Activated CD4-positive, alpha-beta memory T cell treated with anti-CD3 and anti-CD28 coated beads for 36 hours (primary cell): ENCODE measurements at regions of chr4 and their contacts with region 1.

Region 1: DNA sequence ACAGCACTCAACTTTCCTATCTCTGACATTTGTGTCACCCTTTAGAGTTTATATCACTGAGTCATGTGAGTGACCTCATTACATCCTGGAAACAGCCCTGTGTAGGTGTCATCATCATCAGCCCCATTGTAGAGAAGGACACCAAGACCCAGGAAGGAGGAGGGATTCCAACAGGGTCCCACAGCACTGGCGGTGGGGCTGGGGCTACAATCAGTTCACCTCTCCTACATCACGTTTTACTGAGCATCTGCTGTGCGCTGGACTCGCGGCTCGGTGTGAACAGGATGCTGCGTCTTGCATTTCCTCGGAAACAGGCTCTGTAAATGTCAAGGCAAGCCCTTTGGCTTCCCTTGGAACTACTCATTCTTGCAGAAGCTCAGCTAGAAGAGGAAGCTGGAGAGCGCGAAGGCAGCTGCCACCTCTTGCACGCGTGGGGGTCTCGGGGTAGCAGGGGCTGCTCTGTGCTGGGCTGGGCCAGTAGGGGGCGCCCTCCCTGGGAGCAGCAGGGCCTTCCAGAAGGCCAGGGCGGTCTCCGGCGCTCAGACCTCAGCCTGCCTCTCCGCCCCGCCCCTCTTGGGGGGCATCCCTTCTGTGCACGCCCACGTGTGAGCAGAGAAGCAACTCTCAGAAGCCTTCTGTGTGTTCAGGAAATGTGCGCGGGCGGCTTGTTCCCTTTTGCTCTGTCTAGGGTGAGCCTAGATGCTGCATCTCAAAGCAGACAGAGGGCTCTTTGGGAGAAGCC is 29.0 kb downstream of the REELD1 start:
- DNase-seq: peak; percentile 83
- H3K4me3 Mint-ChIP-seq: peak overlapping the region; percentile 65
- H3K27ac Mint-ChIP-seq: peak overlapping the region; percentile 80
- H3K4me1 Mint-ChIP-seq: peaks cover 36% of the 10 kb centered on the region
- H3K27me3 Mint-ChIP-seq: peaks cover 2% of the 10 kb centered on the region

Region 2: DNA sequence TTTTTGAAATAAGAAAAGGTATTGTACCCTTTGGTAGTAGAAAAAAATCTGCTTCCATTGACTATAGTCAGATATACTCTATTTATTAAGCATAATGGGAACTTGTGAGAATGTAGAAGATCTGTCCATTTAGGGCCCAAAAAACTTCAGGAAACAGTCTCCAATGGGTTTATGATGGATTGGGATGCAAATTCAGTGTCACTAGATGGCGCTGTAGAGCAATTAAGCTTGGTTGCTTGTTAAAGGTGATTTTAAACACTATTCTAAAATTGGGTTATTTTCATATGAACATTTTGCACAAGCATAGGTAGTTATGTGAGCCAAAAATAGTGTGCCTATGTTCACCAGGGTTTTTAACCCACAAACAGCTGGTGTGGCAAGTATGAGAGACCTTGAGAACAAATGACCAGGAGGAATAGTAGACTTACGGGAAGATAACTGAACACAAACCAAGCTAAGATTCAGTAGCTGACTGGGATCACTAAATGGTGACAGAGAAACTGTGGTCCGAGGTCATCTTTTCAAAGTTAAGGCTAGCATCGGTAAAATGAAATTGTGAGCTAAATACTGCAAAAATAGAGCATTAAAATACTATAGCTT is 148.1 kb before region 1 on chr4:
- CTCF ChIA-PET with region 1: no interaction called
- POLR2A ChIA-PET with region 1: no interaction called
- intact Hi-C with region 1: loop called (anchors 2 kb)
- DNase-seq: peak; percentile 12
- H3K4me3 Mint-ChIP-seq: no peak overlapping the region
- H3K27ac Mint-ChIP-seq: no peak overlapping the region
- H3K4me1 Mint-ChIP-seq: no peaks in the 10 kb centered on the region
- H3K27me3 Mint-ChIP-seq: peaks cover 7% of the 10 kb centered on the region

Region 3: DNA sequence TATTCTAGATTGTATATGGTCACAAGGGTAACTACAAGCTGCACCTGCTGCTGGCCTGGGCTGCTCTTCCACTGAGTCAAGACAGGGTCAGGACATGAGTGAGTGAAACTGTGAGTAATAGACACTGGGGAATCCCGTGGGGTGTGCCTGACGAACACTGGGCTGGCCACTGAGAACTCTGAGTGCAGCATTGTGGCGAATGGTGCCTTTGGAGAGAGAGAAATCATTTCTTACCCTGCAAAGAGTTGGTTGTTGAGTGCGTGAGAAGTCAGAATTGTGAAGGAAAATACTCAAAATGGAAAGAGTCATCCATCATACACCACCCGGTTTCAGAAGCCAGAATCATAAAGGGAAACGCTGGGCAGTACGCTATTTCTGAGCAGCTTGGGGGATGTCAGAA is 110.9 kb before region 1 on chr4:
- CTCF ChIA-PET with region 1: no interaction called
- POLR2A ChIA-PET with region 1: no interaction called
- intact Hi-C with region 1: loop called (anchors 1 kb)
- DNase-seq: peak; percentile 86
- H3K4me3 Mint-ChIP-seq: no peak overlapping the region
- H3K27ac Mint-ChIP-seq: peak overlapping the region; percentile 26
- H3K4me1 Mint-ChIP-seq: peaks cover 17% of the 10 kb centered on the region
- H3K27me3 Mint-ChIP-seq: peaks cover 12% of the 10 kb centered on the region

Region 4: DNA sequence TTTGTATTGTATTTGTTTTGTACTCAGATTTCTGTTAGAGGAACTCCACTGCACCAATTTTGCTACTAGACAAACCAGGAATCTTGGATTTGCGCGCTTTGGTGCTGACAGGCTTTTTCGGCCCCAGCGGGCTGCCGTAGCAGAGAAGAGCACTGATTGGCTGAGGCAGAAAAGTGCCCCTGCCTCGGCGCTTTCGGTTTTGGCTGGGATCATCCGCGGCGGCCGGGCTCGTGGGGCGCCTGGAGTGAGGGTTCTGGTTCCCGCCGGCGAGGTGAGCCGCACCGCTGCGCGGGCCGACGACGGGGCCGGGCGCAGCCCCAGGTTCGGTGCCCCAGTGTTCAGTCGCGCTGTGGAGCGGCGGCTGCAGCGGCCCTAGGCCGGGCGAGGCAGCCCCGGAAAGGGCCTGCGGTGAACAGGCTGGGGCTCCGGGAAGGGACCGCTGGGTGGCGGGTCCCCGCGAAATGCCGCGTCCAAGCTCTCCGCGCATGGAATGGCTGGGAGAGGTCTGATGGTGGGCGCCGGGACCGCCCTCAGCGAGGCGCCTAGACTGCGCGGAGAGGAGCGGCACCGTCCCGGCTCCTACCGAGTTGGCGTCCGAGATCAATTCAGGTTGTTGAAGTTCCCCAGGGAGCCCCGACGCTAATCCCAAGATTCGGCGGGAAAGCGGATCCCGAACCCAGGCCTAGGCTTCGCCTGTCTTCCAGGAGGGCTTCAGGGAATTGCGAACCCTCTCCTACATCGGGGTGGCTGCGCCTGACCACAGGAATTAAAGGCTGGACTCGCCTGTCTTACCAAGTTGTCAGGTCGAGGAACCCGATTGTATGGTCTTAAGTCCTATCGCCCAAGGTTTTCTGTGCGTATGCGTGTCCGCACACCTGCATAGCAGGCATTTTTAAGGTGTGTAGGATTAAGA is 67.5 kb before region 1 on chr4 and contains the start of gene LSM6:
- CTCF ChIA-PET with region 1: no interaction called
- POLR2A ChIA-PET with region 1: no interaction called
- intact Hi-C with region 1: loop called (anchors 2 kb)
- DNase-seq: peak; percentile 89
- H3K4me3 Mint-ChIP-seq: peak within 1 kb of the TSS; percentile 83
- H3K27ac Mint-ChIP-seq: peak within 1 kb of the TSS; percentile 87
- H3K4me1 Mint-ChIP-seq: peaks cover 42% of the 10 kb centered on the region
- H3K27me3 Mint-ChIP-seq: no peaks in the 10 kb centered on the region
- total RNA-seq, gene LSM6: 64.2 to 65.5 TPM

Region 5: DNA sequence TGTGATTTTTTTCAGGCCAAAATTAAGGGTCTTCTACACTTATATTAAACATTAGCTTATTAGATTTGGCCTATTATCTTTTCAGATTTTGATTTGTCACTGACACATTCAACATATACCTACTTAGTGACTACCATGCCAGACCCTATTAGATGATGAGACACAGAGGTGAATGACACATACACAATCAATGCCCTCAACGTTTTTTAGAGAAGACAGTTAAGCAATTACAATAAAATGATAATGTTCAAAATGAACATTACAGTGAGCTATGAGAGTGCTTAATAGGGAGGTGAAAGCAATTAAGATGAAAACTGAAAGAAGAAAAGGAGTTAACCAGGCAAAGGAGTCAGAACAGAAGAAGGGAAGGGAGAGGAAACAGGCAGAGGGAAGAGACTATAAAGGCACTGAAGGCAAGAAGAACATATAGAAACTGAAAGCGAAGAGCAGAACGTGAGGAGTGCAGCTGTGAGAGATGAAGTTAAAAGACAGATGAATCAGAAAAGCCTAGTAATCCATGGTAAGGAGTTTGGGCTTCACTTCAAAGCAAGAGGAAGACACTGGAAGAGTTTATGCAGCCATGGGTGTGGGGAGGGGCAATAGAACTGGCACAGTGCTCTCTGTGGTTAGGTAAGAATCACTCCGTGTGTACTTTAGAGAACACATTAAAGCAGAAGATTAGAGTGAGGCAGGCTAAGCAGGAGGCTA is 90.0 kb after region 1 on chr4:
- CTCF ChIA-PET with region 1: no interaction called
- POLR2A ChIA-PET with region 1: no interaction called
- intact Hi-C with region 1: loop called (anchors 1 kb)
- DNase-seq: peak; percentile 37
- H3K4me3 Mint-ChIP-seq: no peak overlapping the region
- H3K27ac Mint-ChIP-seq: no peak overlapping the region
- H3K4me1 Mint-ChIP-seq: no peaks in the 10 kb centered on the region
- H3K27me3 Mint-ChIP-seq: no peaks in the 10 kb centered on the region

Region 6: DNA sequence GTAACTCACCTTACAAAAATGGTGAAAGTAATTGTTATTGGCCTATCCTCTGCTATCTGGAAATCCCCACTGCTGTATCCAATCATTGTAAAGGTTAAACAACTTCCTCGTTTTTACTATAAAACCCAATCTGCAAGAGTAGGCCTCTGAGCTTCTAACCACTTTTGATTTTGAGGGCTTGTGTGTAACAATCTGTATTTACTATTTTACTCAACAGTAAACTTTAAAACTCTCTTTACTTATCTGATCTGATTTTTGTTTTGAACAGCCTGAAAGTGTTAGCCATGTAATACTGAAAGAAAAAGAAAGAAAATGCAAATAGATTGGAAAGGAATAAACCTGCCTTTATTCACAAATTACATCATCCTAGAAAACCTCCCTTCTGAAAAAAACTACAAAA is 215.3 kb after region 1 on chr4:
- CTCF ChIA-PET with region 1: no interaction called
- POLR2A ChIA-PET with region 1: no interaction called
- intact Hi-C with region 1: loop called (anchors 1 kb)
- DNase-seq: no peak
- H3K4me3 Mint-ChIP-seq: peak overlapping the region; percentile 46
- H3K27ac Mint-ChIP-seq: peak overlapping the region; percentile 89
- H3K4me1 Mint-ChIP-seq: peaks cover 17% of the 10 kb centered on the region
- H3K27me3 Mint-ChIP-seq: no peaks in the 10 kb centered on the region

Region 7: DNA sequence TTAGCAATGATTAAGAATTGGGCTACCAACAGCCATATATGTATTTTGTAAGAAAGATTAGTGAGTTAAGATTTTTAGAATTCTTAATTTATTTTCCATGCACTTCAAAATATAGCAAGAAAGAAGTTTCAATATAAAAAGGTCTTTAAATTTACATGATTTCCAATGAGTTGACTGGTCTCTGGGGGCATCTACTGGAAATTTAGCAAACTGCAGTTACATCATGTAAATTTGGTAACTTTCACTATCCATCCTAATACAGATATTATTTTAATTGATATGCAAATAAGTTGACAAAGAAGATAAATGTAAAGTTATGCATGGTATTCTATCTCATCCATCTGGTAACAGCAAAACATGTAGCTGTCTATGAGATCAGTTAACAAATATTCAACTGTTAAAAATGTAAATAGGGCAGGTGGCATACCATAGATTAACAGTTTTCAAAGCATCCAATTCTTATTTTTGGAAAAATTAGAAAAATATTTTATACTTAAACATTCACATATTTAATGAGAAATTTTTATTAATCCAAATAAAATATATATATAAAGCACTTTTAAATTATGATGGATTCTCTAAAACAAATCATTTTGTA is 673.3 kb after region 1 on chr4:
- CTCF ChIA-PET with region 1: interaction called, 6 read pairs
- POLR2A ChIA-PET with region 1: no interaction called
- intact Hi-C with region 1: loop called (anchors 1 kb)
- DNase-seq: no peak
- H3K4me3 Mint-ChIP-seq: no peak overlapping the region
- H3K27ac Mint-ChIP-seq: no peak overlapping the region
- H3K4me1 Mint-ChIP-seq: no peaks in the 10 kb centered on the region
- H3K27me3 Mint-ChIP-seq: peaks cover 4% of the 10 kb centered on the region